H1 (cell line): ENCODE measurements at regions of chr13 and their contacts with region 1.

Region 1: GRCh38 chr13:37869756-37870488 is at the start of gene TRPC4:
- DNase-seq: peak in 1 of 2 experiments; percentile 78
- H3K4me3 ChIP-seq: peak within 1 kb of the TSS; percentile 93 to 94 (median 93)
- H3K27ac ChIP-seq: peak within 1 kb of the TSS; percentile 64
- H3K4me1 ChIP-seq: peaks cover 0 to 6% (median 2%) of the 10 kb centered on the region in 4 experiments; a peak in 2 of 7 replicates
- H3K27me3 ChIP-seq: no peaks in the 10 kb centered on the region
- CTCF ChIP-seq: peak; percentile 78 to 91 (median 81)
- EP300 ChIP-seq: no peak
- POLR2A ChIP-seq: no peak; a peak in 1 of 3 replicates
- RAD21 ChIP-seq: peak; percentile 91
- total RNA-seq, gene TRPC4: 14.3 and 14.7 TPM in 2 replicates

Region 2: GRCh38 chr13:37944869-37945442 is 75.0 kb after region 1 on chr13:
- CTCF ChIA-PET with region 1: interaction called, 11 read pairs
- POLR2A ChIA-PET with region 1: interaction called, 3 read pairs
- DNase-seq: no peak
- H3K4me3 ChIP-seq: no peak overlapping the region
- H3K27ac ChIP-seq: no peak overlapping the region
- H3K4me1 ChIP-seq: peaks cover 0 to 6% (median 0%) of the 10 kb centered on the region in 4 experiments; a peak in 1 of 7 replicates
- H3K27me3 ChIP-seq: no peaks in the 10 kb centered on the region
- CTCF ChIP-seq: no peak
- EP300 ChIP-seq: no peak
- POLR2A ChIP-seq: 0 out of 3 replicates have a peak, but pooled peaks of 1 of the 2 experiments have one; percentile 6
- RAD21 ChIP-seq: no peak

Region 3: DNA sequence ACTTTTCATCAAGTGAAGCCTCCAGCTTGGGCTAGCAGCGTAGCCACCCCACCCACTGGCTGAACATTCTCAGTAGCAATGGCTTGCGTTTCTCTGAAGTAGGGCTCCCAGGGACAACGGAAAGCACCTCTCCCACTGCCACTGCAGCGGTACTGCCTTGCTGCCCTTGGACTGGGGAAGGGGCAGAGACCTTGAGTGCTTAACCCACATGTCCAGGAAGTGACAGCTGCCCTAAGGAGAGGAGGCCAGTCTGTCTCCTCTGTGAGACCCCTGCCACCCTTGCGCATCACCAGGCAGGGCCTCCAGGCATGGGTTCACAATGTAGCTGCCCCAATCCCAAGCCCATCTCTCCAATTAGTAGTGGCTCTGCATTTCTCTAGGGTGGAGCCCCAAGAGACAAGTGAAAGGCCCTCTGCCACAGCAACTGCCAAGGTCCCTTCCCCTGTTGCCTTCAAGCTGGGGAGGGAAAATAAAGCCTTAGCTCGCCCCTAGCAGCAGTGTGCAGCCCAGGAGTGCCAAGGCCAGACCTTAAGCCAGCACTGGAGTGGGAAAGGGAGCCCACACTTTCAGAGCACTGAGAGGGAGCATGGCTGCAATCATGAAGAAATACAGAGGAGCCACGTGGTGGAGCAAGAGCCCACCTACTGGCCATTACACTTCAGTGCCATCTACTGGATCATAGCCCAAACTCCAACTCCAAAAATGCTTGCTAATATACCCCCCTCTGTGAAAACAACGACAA is 175.6 kb after region 1 on chr13:
- CTCF ChIA-PET with region 1: interaction called, 16 read pairs
- POLR2A ChIA-PET with region 1: no interaction called
- DNase-seq: peak in 1 of 2 experiments; percentile 23
- H3K4me3 ChIP-seq: no peak overlapping the region
- H3K27ac ChIP-seq: no peak overlapping the region
- H3K4me1 ChIP-seq: no peaks in the 10 kb centered on the region
- H3K27me3 ChIP-seq: no peaks in the 10 kb centered on the region
- CTCF ChIP-seq: peak; percentile 41 to 88 (median 70)
- EP300 ChIP-seq: no peak
- POLR2A ChIP-seq: no peak
- RAD21 ChIP-seq: peak; percentile 79 to 80

Region 4: GRCh38 chr13:38223089-38223488 is 353.2 kb after region 1 on chr13:
- CTCF ChIA-PET with region 1: interaction called, 13 read pairs
- POLR2A ChIA-PET with region 1: no interaction called
- DNase-seq: peak in 1 of 2 experiments; percentile 17
- H3K4me3 ChIP-seq: no peak overlapping the region
- H3K27ac ChIP-seq: no peak overlapping the region
- H3K4me1 ChIP-seq: no peaks in the 10 kb centered on the region
- H3K27me3 ChIP-seq: no peaks in the 10 kb centered on the region
- CTCF ChIP-seq: peak in 2 of 3 experiments; percentile 76 to 78; a peak in 3 of 4 replicates
- EP300 ChIP-seq: no peak
- POLR2A ChIP-seq: no peak
- RAD21 ChIP-seq: peak; percentile 92 to 98